Activated CD8-positive, alpha-beta T cell treated with anti-CD3 and anti-CD28 coated beads for 36 hours (primary cell): ENCODE measurements at regions of chr12 and their contacts with region 1.

Region 1: DNA sequence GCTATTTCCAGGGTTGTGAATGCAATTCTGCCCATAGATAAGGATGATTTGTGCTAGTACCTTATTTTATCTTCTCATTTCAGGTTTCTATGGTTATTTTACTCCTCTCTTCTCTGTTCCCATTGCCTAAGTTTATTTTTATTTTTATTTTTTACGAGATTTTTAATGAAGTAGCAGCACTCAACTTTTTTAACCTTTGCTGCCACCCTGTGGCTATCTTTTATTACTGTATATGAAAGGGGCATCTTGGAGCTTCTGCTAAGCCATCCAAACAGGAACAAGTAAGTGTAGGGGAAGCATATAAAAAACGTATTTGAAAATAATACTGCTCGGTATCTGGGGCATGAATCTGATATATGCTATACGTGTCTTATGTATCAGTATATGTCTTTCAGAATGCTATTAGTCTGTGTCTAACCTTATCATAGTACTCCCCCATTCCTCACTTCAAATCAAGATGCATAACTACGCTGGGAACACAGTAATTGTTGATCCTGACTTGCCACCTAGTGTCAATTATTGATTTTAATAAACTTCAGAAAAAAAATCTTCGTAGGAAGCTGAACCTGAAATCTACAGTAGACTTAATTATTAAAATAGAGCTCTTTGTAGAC is 60.3 kb downstream of the KLRG1 start:
- DNase-seq: peak; percentile 27
- ATAC-seq: peak; percentile 75
- H3K4me3 Mint-ChIP-seq: no peak overlapping the region
- H3K27ac Mint-ChIP-seq: no peak overlapping the region
- H3K4me1 Mint-ChIP-seq: peaks cover 13% of the 10 kb centered on the region
- H3K27me3 Mint-ChIP-seq: no peaks in the 10 kb centered on the region
- CTCF ChIP-seq: peak; percentile 80

Region 2: GRCh38 chr12:8648576-8649205 is 400.9 kb before region 1 on chr12:
- CTCF ChIA-PET with region 1: interaction called, 11 read pairs
- POLR2A ChIA-PET with region 1: no interaction called
- intact Hi-C with region 1: loop called (anchors 10 kb)
- DNase-seq: peak; percentile 94
- ATAC-seq: peak; percentile 76
- H3K4me3 Mint-ChIP-seq: no peak overlapping the region
- H3K27ac Mint-ChIP-seq: peak overlapping the region; percentile 66
- H3K4me1 Mint-ChIP-seq: peaks cover 56% of the 10 kb centered on the region
- H3K27me3 Mint-ChIP-seq: peaks cover 10% of the 10 kb centered on the region
- CTCF ChIP-seq: no peak

Region 3: GRCh38 chr12:8681041-8681902 is 368.4 kb before region 1 on chr12:
- CTCF ChIA-PET with region 1: interaction called, 27 read pairs
- POLR2A ChIA-PET with region 1: interaction called, 3 read pairs
- intact Hi-C with region 1: loop called (anchors 5 kb)
- DNase-seq: no peak
- ATAC-seq: no peak
- H3K4me3 Mint-ChIP-seq: no peak overlapping the region
- H3K27ac Mint-ChIP-seq: no peak overlapping the region
- H3K4me1 Mint-ChIP-seq: no peaks in the 10 kb centered on the region
- H3K27me3 Mint-ChIP-seq: no peaks in the 10 kb centered on the region
- CTCF ChIP-seq: no peak

Region 4: DNA sequence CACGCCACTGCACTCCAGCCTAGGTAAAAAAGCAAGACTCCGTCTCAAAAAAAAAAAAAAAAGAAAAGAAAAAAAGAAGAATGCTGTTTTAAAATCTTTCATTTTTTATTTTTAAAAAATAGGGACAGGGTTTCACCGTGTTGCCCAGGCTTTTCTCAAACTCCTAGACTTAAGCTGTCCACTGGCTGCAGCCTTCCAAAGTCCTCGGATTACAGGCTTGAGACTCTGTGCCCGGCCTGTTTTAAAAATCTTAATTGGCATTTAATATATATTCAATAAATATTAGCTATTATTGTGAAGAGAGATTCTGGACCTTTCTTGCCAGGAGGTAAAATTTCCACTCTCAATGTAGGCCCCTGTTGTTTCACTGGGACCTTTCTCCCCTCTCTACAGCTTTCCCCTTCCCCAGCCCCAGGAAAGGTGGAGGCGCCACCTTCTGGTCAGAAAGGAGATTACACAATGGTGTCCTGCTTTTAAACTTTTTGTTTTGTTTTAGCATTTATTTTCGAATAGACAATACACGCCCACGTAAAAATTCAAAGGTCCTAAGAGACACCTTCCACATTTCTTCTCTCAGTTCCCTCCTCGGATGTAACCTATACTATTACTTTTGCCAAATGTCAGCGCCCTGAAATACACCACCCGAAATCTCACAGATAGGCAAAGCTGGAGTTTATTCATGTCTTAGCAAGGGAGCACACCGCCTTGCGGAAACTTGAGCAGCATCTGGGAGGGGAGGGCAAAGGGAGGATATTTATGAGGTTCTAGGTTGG is 159.1 kb before region 1 on chr12:
- CTCF ChIA-PET with region 1: interaction called, 36 read pairs
- POLR2A ChIA-PET with region 1: no interaction called
- intact Hi-C with region 1: no loop called
- DNase-seq: peak; percentile 66
- ATAC-seq: peak; percentile 88
- H3K4me3 Mint-ChIP-seq: peak overlapping the region; percentile 75
- H3K27ac Mint-ChIP-seq: peak overlapping the region; percentile 21
- H3K4me1 Mint-ChIP-seq: peaks cover 13% of the 10 kb centered on the region
- H3K27me3 Mint-ChIP-seq: no peaks in the 10 kb centered on the region
- CTCF ChIP-seq: peak; percentile 96

Region 5: DNA sequence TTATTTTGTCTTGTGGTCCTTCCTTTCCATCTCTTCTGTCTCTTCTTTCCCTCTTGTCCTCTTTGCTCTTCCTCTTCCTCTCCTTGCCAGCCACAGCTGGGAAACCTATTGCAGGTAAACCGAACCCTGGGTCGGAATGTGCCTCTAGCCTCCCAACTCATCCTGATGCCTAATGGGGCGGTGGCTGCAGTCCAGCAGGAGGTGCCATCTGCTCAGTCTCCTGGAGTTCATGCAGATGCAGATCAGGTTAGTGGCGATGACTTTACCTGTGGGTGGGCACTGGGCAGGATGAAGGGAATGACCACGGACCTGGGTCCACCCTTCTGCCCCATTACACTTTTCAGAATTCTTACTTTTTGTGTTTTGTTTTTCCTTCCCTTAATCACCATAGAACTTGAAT is 127.1 kb before region 1 on chr12:
- CTCF ChIA-PET with region 1: interaction called, 64 read pairs
- POLR2A ChIA-PET with region 1: no interaction called
- intact Hi-C with region 1: no loop called
- DNase-seq: peak; percentile 12
- ATAC-seq: no peak
- H3K4me3 Mint-ChIP-seq: no peak overlapping the region
- H3K27ac Mint-ChIP-seq: no peak overlapping the region
- H3K4me1 Mint-ChIP-seq: no peaks in the 10 kb centered on the region
- H3K27me3 Mint-ChIP-seq: no peaks in the 10 kb centered on the region
- CTCF ChIP-seq: no peak

Region 6: DNA sequence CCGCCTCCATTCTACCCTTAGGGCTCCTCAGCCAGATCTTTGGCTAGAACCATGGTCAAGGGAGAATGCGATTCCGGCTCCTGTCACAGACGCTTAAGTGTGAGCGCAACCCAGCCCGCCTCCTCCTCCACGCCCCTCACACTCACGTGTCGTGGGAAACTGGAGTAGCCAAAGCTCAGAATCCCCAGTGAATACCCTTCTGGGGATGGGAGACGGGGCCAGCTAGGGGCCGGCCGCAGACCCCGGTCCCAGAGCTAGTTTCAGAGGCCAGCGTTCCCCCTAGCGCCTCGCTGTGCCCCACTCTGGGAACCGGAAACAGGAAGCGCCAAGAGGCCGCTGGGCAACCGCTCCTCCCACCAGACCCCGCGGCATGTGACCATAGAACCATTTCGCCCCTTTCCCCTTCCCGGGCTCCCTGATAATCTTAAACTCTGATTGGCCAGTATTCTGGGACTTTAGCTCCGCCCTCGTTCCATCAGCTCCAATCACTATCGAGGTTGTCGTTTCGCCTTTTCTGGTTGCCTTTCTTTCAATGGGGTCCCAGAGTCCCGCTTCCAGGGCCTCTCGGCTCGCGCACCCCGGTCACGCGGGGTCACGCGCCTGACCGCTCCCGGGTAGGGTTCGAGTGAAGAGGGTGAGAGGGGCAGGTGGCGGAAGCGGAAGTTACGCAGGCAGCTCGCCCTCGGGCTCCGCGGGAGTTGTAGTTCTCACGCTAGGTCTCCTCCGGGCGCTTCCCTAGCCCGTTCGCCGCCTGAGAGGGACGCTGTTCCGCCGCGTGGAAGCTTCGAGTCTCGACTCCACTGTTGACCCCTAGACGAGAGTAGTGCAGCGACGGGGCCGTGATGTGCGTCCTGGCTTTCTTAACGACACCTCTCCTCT is 100.0 kb before region 1 on chr12 and contains the start of gene M6PR:
- CTCF ChIA-PET with region 1: interaction called, 153 read pairs
- POLR2A ChIA-PET with region 1: interaction called, 4 read pairs
- intact Hi-C with region 1: no loop called
- DNase-seq: peak; percentile 97
- ATAC-seq: peak; percentile 83
- H3K4me3 Mint-ChIP-seq: peak within 1 kb of the TSS; percentile 94
- H3K27ac Mint-ChIP-seq: peak within 1 kb of the TSS; percentile 90
- H3K4me1 Mint-ChIP-seq: peaks cover 55% of the 10 kb centered on the region
- H3K27me3 Mint-ChIP-seq: no peaks in the 10 kb centered on the region
- CTCF ChIP-seq: peak; percentile 43
- total RNA-seq, gene M6PR: 199 to 206 TPM

Region 7: DNA sequence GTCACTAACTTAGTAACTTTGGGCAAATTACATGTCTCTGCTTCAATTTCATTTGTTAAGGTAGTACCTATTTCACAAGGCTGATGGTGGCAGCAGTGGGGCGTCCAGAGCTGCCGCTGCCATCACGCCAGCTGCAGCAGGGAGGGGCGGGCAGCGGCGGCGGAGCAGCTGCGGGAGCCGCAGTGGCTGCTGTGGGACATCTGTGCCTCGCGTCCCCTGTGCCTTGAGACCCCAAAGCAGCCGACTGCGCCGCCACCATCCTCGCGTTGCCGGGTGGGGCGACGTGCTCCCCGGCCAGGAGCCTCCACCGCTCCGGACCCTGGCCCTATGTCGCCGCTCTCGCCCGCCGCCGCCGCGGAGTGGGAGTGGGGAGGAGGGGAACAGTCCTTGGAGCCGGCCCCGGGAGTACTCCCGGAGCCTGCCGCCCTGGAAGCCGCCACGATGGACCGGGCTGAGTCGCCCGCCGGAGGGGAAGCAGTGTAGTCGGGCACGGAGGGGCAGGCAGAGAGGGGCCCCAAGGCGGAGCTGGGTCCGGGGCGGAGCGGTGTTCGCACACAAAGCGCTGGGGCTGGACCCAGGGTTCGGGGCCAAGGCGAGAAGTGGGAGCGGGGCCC is 14.7 kb after region 1 on chr12:
- CTCF ChIA-PET with region 1: interaction called, 69 read pairs
- POLR2A ChIA-PET with region 1: no interaction called
- intact Hi-C with region 1: no loop called
- DNase-seq: peak; percentile 74
- ATAC-seq: peak; percentile 95
- H3K4me3 Mint-ChIP-seq: peak overlapping the region; percentile 71
- H3K27ac Mint-ChIP-seq: no peak overlapping the region
- H3K4me1 Mint-ChIP-seq: peaks cover 9% of the 10 kb centered on the region
- H3K27me3 Mint-ChIP-seq: peaks cover 2% of the 10 kb centered on the region
- CTCF ChIP-seq: no peak

Region 8: GRCh38 chr12:9198012-9198411 is 148.4 kb after region 1 on chr12:
- CTCF ChIA-PET with region 1: no interaction called
- POLR2A ChIA-PET with region 1: no interaction called
- intact Hi-C with region 1: no loop called
- DNase-seq: no peak
- ATAC-seq: peak; percentile 71
- H3K4me3 Mint-ChIP-seq: no peak overlapping the region
- H3K27ac Mint-ChIP-seq: no peak overlapping the region
- H3K4me1 Mint-ChIP-seq: no peaks in the 10 kb centered on the region
- H3K27me3 Mint-ChIP-seq: no peaks in the 10 kb centered on the region
- CTCF ChIP-seq: no peak

Region 9: DNA sequence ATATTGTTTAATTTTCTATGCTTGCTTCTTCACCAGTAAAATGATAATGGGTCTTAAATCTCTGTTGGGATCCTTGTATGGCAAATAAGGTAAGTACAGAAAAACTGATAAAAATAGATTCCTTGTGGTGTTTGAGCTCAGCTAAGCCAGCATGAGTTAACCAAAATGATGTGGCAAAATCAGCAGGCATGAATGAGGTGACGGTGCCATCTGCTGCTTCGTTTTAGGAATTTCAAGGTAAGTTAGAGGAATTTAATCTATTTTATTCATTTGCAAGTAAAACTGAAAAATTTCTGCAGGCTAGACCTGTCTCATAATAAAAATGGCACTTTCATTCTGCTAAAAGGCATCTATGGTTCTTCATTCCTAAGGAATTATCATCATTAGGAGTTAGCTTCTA is 1090.4 kb after region 1 on chr12:
- CTCF ChIA-PET with region 1: no interaction called
- POLR2A ChIA-PET with region 1: no interaction called
- intact Hi-C with region 1: no loop called
- DNase-seq: peak; percentile 66
- ATAC-seq: peak; percentile 49
- H3K4me3 Mint-ChIP-seq: no peak overlapping the region
- H3K27ac Mint-ChIP-seq: no peak overlapping the region
- H3K4me1 Mint-ChIP-seq: peaks cover 2% of the 10 kb centered on the region
- H3K27me3 Mint-ChIP-seq: peaks cover 6% of the 10 kb centered on the region
- CTCF ChIP-seq: peak; percentile 66